Cardiac septum (tissue), 1 donor: ENCODE measurements at regions of chr9 and their contacts with region 1.

Region 1: GRCh38 chr9:75429531-75430475 is 341.5 kb downstream of the OSTF1 start:
- DNase-seq: no peak

Region 2: GRCh38 chr9:75467142-75467541 is 37.3 kb after region 1 on chr9:
- intact Hi-C with region 1: no loop called
- DNase-seq: no peak

Region 3: DNA sequence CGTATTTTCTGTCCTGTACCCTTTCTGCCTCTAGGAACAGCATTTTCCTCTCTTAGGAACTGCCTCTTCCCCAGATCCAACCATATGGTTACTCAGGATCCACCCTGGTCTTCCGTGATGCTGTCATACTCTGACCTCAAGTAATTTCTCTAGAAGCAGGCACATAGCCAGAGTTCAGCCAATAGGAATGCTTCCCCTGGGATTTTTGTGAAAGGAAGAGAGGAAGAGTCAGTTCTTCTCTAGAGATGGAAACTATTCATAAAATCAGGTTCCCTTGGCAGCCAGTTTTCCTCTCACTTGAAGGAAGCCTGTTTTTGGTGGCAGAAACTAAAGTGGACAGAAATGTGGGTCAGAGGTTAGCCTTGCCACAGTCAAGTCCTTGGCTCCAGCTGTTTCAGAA is 60.5 kb after region 1 on chr9:
- intact Hi-C with region 1: loop called (anchors 10 kb)
- DNase-seq: no peak